Left ventricle myocardium superior (tissue), 1 donor: ENCODE measurements at regions of chr1 and their contacts with region 1.

Region 1: GRCh38 chr1:17236779-17237560 is 11.9 kb upstream of the PADI3 start:
- DNase-seq: peak; percentile 88
- ATAC-seq: peak; percentile 89

Region 2: DNA sequence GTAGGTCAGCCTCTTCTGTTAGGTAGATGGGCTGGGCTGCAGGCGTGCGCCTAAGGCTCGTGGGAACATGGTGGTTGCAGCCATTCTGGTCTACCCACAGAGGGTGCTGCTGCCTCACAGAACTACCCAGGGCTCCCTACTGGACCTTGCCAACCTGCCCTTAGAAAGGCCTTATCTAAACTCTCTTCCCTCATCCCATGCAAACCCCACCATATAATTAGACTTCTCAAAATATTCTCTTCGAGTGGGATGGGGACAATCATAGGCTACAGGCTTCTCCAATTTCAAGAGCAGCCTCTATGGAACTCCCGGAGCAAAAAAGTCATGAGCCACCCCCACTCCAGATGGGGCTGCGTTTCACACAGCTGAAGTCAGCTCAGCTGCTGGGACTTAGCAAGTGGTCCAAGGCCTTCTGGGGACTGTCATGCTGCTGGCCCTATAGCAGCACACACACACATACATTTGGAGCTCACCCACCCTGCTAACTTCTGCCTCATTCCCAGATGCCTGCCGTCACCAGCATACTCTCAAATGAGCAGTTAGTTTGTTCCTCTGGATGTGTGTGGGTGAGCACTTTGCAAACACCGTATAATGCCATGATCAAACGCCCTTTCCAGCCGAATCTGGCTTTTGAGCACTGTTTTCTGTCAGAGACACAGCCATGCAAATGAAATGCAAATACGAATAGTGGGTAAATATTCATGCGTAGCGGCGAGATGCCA is 177.1 kb before region 1 on chr1:
- intact Hi-C with region 1: loop called (anchors 5 kb)
- DNase-seq: peak; percentile 72
- ATAC-seq: peak; percentile 87

Region 3: DNA sequence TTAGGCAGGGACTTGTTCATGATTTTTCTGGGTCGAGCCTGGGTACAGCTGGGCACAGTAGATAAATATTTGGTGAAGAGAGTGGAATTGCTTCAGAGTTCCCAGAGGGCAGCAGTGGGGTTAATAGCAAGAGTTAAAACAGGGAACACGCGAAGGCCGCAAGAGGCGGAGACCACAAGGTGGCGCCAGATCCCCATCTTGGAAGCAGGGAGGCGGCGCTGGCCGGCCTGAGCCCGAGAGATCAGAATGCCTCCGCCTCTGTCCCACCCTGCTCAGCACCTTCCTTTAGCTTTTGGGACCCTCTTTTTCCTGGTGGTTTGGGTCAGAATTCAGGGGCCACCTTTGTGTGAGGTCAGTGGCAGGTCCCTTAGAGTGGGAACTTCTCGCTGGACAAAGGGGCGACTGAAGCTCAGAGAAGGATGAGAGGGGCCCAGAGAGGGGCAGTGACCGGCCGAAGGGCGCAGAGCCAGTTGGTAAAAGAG is 111.2 kb before region 1 on chr1:
- intact Hi-C with region 1: loop called (anchors 2 kb)
- DNase-seq: peak; percentile 92
- ATAC-seq: peak; percentile 87